Naive thymus-derived CD4-positive, alpha-beta T cell (primary cell): ENCODE measurements at regions of chr17 and their contacts with region 1.

Region 1: DNA sequence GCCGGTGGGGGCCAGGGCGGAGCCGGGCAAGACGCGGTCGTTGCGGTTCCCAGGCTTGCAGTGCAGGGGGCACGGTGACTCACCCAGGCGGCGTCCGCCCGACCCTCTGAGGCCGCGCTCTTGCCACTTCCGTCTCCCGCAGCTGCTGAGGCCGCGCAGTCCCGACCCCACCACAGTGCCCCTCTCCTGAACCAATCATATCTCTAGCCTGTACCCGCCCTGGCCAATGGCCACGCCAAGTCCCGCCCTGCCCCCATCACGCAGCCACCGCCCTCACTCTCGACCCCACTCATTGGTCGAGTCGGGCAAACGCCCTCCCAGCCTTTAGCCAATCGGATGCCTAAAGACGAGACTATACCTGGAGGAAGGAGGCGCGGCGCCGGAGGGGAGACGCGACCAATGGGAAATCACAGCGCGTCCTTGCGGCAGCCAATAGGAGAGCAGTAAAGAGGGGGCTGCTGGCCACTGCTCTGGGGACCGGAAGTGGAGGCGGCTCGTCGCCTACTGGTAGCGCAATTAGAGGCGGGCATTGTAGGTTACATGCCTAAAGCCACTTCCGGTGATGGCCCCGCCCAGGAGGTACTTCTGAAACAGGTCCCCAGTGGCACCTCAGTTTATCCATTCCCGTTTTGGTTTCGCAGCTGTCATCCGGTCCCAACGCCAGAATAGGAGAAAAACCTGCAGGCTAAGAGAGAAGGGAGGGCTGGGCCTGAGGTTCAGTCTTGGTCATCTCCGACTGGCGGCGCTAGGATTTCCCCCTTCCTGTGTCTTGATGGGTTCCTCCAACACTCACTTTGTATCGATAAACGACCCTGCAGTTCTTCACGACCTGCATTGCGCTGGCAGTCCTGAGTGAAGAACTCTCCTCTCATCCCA is 3.5 kb upstream of the MTMR4 start:
- DNase-seq: peak; percentile 92 to 100 (median 100)
- ATAC-seq: peak; percentile 89
- H3K4me3 ChIP-seq: peak overlapping the region; percentile 99
- H3K4me3 Mint-ChIP-seq: peak overlapping the region; percentile 92 to 98 (median 96)
- H3K27ac ChIP-seq: peak overlapping the region; percentile 84
- H3K27ac Mint-ChIP-seq: peak overlapping the region; percentile 82 to 97 (median 95)
- H3K4me1 ChIP-seq: peaks cover 20 to 28% of the 10 kb centered on the region in 2 donors
- H3K4me1 Mint-ChIP-seq: peaks cover 30 to 49% (median 46%) of the 10 kb centered on the region in 7 donors
- H3K27me3 ChIP-seq: no peaks in the 10 kb centered on the region
- H3K27me3 Mint-ChIP-seq: peaks cover 0 to 5% (median 0%) of the 10 kb centered on the region in 5 donors

Region 2: GRCh38 chr17:58006924-58007780 is 510.8 kb before region 1 on chr17 and contains the start of gene SRSF1:
- CTCF ChIA-PET with region 1: no interaction called
- POLR2A ChIA-PET with region 1: no interaction called
- intact Hi-C with region 1: loop called (anchors 1 to 2 kb)
- DNase-seq: peak; percentile 95 to 99 (median 98)
- ATAC-seq: peak; percentile 92
- H3K4me3 ChIP-seq: peak within 1 kb of the TSS; percentile 99
- H3K4me3 Mint-ChIP-seq: peak within 1 kb of the TSS; percentile 96 to 100 (median 99)
- H3K27ac ChIP-seq: peak within 1 kb of the TSS; percentile 93
- H3K27ac Mint-ChIP-seq: peak within 1 kb of the TSS; percentile 99 to 100 (median 99)
- H3K4me1 ChIP-seq: peaks cover 31 to 32% of the 10 kb centered on the region in 2 donors
- H3K4me1 Mint-ChIP-seq: peaks cover 33 to 60% (median 54%) of the 10 kb centered on the region in 7 donors
- H3K27me3 ChIP-seq: no peaks in the 10 kb centered on the region
- H3K27me3 Mint-ChIP-seq: peaks cover 0 to 3% (median 0%) of the 10 kb centered on the region in 5 donors
- total RNA-seq, gene SRSF1: 115 to 362 (median 249) TPM

Region 3: DNA sequence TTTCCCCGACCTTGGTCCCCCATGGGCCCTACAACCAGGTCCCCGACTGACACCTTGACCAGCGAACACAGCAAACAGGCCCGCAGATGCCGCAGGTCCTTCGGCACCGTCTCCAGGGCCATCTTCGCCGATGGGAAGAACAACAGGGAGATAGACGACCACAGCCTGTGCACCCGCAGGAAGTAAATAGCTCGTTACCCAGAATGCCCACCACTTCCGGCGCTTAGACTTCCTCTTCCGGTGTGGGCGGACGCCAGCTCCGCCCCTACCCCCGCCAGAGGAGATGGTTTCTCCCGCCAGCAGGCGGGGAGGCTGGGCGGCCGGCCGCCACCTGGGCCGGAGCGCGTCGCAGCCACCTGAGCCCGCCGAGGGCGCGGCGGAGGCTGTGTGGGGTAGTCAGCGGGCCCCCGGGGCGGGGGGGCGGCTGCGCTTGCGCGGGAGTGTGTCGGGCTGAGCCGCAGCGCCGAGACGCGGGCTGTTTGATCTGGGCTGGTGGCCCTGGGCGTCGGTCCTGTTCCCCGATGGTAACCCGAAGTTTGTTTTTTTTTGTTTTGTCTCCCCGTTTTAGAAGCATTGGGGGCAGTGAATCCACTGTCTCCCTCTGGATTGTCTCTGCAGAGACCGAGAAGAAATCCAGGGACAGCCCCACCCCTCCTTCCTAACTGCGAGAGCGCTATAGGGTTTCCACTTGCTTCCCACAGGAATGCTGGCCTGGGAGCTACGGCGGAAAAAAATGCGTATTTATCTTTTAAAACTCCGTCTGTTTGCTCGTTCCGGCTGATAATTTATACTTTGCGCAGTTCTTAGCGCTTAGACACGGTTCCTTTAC is 165.7 kb before region 1 on chr17 and contains the start of gene SUPT4H1:
- CTCF ChIA-PET with region 1: no interaction called
- POLR2A ChIA-PET with region 1: interaction called, 7 read pairs
- intact Hi-C with region 1: loop called (anchors 1 kb)
- DNase-seq: peak; percentile 83 to 93 (median 92)
- ATAC-seq: peak; percentile 98
- H3K4me3 ChIP-seq: peak within 1 kb of the TSS; percentile 95
- H3K4me3 Mint-ChIP-seq: peak within 1 kb of the TSS; percentile 97 to 100 (median 99)
- H3K27ac ChIP-seq: peak within 1 kb of the TSS; percentile 85
- H3K27ac Mint-ChIP-seq: peak within 1 kb of the TSS; percentile 93 to 99 (median 98)
- H3K4me1 ChIP-seq: peaks cover 16 to 31% of the 10 kb centered on the region in 2 donors
- H3K4me1 Mint-ChIP-seq: peaks cover 38 to 73% (median 66%) of the 10 kb centered on the region in 7 donors
- H3K27me3 ChIP-seq: no peaks in the 10 kb centered on the region
- H3K27me3 Mint-ChIP-seq: no peaks in the 10 kb centered on the region
- total RNA-seq, gene SUPT4H1: 36.0 to 75.6 (median 62.3) TPM

Region 4: DNA sequence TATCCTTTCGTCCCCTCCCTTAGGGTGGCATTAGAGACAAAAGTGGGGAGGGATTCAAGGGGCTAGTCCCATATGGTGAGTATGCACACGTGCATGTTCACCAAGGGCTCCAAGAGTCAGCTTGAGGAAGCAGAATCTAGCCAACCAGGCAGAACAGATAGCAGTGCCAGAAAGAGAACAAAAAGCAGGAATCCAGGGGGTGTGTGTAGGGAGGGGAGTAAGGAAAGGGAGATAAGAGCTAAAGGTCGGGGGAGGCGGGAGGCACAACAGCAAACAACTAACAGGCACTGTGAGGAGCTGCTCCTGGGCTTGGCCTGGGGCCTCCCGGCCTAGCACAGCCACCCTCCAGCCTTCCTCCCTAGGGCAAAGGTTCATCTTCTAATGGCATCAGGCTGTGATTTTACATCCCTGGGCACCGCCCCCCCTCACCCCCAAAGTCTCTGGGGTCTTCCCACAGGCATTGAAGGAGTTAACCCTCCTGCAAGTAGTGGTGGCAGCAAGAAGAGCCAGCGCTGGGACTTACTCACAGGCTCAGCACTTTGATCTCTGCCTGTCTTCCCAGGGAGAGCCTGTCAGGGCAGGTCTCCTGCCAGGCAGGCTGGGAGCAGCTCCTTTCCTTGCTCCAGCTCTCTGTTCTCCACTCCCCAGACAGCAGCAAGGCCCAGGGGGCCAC is 153.6 kb before region 1 on chr17:
- CTCF ChIA-PET with region 1: no interaction called
- POLR2A ChIA-PET with region 1: no interaction called
- intact Hi-C with region 1: no loop called
- DNase-seq: no peak
- ATAC-seq: no peak
- H3K4me3 ChIP-seq: no peak overlapping the region
- H3K4me3 Mint-ChIP-seq: no peak overlapping the region
- H3K27ac ChIP-seq: no peak overlapping the region
- H3K27ac Mint-ChIP-seq: no peak overlapping the region
- H3K4me1 ChIP-seq: peaks cover 0 to 7% of the 10 kb centered on the region in 2 donors
- H3K4me1 Mint-ChIP-seq: peaks cover 7 to 19% (median 10%) of the 10 kb centered on the region in 7 donors
- H3K27me3 ChIP-seq: no peaks in the 10 kb centered on the region
- H3K27me3 Mint-ChIP-seq: no peaks in the 10 kb centered on the region

Region 5: DNA sequence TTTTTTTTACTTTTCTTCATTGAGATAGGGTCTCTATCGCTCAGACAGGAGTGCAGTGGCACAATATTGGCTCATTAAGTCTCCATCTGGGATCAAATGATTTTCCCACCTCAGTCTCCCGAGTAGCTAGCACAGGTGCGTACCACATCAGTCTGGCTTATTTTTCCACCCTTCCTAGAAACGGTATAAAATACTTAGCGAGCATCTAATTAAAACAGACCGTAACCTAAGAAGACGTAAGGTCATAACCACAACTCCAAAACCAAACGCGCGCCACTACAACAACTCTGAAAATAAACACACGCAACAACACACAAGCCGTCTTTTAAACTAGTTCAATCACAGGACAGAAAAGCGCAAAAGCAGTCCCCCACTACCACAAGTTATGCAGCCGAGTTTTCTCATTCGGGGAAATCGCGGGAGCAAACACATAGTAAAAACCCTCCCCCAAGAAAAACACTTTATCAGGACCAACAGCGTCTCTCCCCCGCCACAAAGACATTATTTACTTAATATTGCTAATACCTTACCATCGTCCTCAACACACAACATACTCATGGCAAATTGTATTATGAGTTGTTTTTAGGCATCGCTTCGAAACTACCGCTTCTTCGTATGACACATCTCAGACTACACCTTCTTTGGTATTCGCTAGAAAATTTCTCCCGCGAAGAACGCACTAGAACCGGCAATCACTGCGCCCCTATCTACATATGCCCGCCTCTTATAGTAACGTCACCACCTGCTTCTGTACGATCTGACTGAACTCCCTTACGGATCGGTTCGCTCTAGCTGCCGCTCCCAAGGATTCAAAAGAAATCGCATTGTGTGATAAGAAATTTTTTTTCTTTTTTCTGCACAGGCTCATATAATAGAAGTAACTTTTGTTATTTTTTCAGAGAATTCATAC is 141.1 kb after region 1 on chr17:
- CTCF ChIA-PET with region 1: no interaction called
- POLR2A ChIA-PET with region 1: interaction called, 3 read pairs
- intact Hi-C with region 1: loop called (anchors 1 kb)
- DNase-seq: peak; percentile 47 to 89 (median 82)
- ATAC-seq: peak; percentile 88
- H3K4me3 ChIP-seq: peak overlapping the region; percentile 44
- H3K4me3 Mint-ChIP-seq: peak overlapping the region; percentile 83 to 93 (median 88)
- H3K27ac ChIP-seq: peak overlapping the region; percentile 82
- H3K27ac Mint-ChIP-seq: peak overlapping the region; percentile 94 to 100 (median 97)
- H3K4me1 ChIP-seq: no peaks in the 10 kb centered on the region
- H3K4me1 Mint-ChIP-seq: peaks cover 10 to 20% (median 15%) of the 10 kb centered on the region in 7 donors
- H3K27me3 ChIP-seq: no peaks in the 10 kb centered on the region
- H3K27me3 Mint-ChIP-seq: peaks cover 0 to 11% (median 0%) of the 10 kb centered on the region in 5 donors

Region 6: GRCh38 chr17:59331129-59331928 is 813.4 kb after region 1 on chr17 and contains the start of gene YPEL2:
- CTCF ChIA-PET with region 1: no interaction called
- POLR2A ChIA-PET with region 1: no interaction called
- intact Hi-C with region 1: loop called in 1 of 2 experiments (anchors 2 kb)
- DNase-seq: peak; percentile 77 to 92 (median 89)
- ATAC-seq: peak; percentile 96
- H3K4me3 ChIP-seq: peak within 1 kb of the TSS; percentile 67
- H3K4me3 Mint-ChIP-seq: peak within 1 kb of the TSS; percentile 89 to 96 (median 94)
- H3K27ac ChIP-seq: peak within 1 kb of the TSS; percentile 77
- H3K27ac Mint-ChIP-seq: peak within 1 kb of the TSS; percentile 77 to 98 (median 94)
- H3K4me1 ChIP-seq: peaks cover 30 to 55% of the 10 kb centered on the region in 2 donors
- H3K4me1 Mint-ChIP-seq: peaks cover 53 to 85% (median 79%) of the 10 kb centered on the region in 7 donors
- H3K27me3 ChIP-seq: no peaks in the 10 kb centered on the region
- H3K27me3 Mint-ChIP-seq: peaks cover 0 to 11% (median 0%) of the 10 kb centered on the region in 5 donors
- total RNA-seq, gene YPEL2: 10.6 to 52.0 (median 46.8) TPM

Region 7: DNA sequence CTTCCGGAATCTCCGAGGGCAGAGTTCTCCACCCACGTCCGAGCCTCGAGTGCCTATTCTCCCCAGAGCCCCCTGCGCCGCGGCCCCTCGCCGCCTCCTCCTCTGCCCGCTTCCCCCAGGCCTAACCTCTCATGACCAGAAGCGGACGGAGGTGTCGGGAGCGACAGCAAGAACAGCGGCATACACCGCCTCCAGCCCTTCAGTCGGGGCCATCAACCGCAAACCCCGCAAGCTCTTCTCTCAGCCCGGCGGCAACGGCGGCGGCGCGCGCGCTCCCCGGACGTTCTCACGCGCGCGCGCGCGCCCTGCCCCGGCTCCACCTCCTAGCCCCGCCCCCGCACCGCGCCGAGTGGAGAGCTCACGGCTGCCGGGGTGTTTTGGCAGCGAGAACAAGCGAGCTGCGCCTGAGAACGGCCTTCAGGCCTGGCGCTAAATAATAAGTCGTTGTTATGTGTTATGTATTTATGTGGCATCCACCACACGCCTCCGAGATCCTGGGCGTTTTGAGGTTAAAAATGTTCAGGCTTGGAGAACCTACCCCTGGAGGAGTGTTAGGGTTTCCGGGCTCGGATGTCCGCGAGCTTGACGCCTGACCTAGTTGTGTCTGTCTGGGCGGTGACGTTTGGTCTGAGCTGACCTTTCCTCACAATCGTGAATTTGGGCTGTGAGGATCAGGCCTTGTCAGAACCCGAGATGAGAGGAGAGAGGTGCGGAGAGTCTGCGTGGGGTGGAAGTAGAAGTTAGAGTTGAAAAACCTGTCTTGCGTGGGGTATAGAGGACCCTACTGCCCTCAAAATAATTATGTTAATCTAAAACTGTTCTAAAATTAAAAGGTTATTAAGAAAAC is 1446.7 kb after region 1 on chr17 and contains the start of gene RNFT1:
- CTCF ChIA-PET with region 1: no interaction called
- POLR2A ChIA-PET with region 1: no interaction called
- intact Hi-C with region 1: loop called in 1 of 2 experiments (anchors 1 kb)
- DNase-seq: peak; percentile 78 to 97 (median 88)
- ATAC-seq: peak; percentile 97
- H3K4me3 ChIP-seq: peak within 1 kb of the TSS; percentile 92
- H3K4me3 Mint-ChIP-seq: peak within 1 kb of the TSS; percentile 86 to 99 (median 94)
- H3K27ac ChIP-seq: peak within 1 kb of the TSS; percentile 84
- H3K27ac Mint-ChIP-seq: peak within 1 kb of the TSS; percentile 88 to 99 (median 94)
- H3K4me1 ChIP-seq: peaks cover 16 to 18% of the 10 kb centered on the region in 2 donors
- H3K4me1 Mint-ChIP-seq: peaks cover 16 to 32% (median 23%) of the 10 kb centered on the region in 7 donors
- H3K27me3 ChIP-seq: no peaks in the 10 kb centered on the region
- H3K27me3 Mint-ChIP-seq: peaks cover 0 to 5% (median 0%) of the 10 kb centered on the region in 5 donors
- total RNA-seq, gene RNFT1: 22.8 to 45.8 (median 33.1) TPM